ENCODE measurements at regions of chr16 and their contacts with region 1.

Region 1: DNA sequence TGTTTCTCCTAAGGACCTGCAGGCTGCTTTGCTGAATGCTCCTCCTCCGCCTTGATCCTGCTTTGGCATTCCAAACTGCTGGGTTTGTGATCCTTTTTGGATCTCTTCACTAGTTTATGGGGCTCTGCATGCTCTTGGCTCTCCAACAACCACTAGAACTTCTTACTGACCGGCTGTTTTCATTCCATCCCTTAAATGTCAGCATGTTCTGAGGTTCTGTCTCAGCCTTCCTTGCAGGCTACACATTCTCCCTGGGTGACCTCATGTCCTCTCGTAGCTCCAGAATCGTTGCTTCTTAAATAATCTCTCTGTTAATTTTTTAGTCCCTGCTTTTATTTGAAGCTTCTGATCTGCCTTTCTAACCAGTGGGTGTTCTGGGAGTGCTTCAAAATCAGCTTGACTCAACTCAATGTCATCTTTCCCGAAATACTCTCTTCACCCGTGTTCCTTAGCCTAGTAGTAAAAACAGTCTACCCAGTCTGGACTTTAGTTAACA is 119.0 kb upstream of the HS3ST2 start:
- DNase-seq: no peak
- H3K4me3 ChIP-seq: no peak overlapping the region
- H3K27ac ChIP-seq: peak overlapping the region; percentile 43 to 83 (median 65)
- H3K4me1 ChIP-seq: peaks cover 0 to 7% (median 7%) of the 10 kb centered on the region in 3 donors
- H3K27me3 ChIP-seq: peaks cover 0 to 4% (median 0%) of the 10 kb centered on the region in 4 donors
- CTCF ChIP-seq: no peak
- POLR2A ChIP-seq: no peak

Region 2: GRCh38 chr16:21560462-21560861 is 1134.5 kb before region 1 on chr16:
- intact Hi-C with region 1: loop called (anchors 5 kb)
- DNase-seq: no peak
- H3K4me3 ChIP-seq: no peak overlapping the region
- H3K27ac ChIP-seq: no peak overlapping the region
- H3K4me1 ChIP-seq: peaks cover 0 to 5% (median 3%) of the 10 kb centered on the region in 3 donors
- H3K27me3 ChIP-seq: peaks cover 0 to 26% (median 0%) of the 10 kb centered on the region in 4 donors
- CTCF ChIP-seq: no peak
- POLR2A ChIP-seq: no peak

Region 3: GRCh38 chr16:22614271-22614947 is 80.5 kb before region 1 on chr16:
- intact Hi-C with region 1: no loop called
- DNase-seq: no peak
- H3K4me3 ChIP-seq: no peak overlapping the region
- H3K27ac ChIP-seq: no peak overlapping the region
- H3K4me1 ChIP-seq: no peaks in the 10 kb centered on the region
- H3K27me3 ChIP-seq: peaks cover 0 to 55% (median 0%) of the 10 kb centered on the region in 4 donors
- CTCF ChIP-seq: no peak
- POLR2A ChIP-seq: no peak

Region 4: GRCh38 chr16:22775220-22775922 is 80.4 kb after region 1 on chr16:
- intact Hi-C with region 1: no loop called
- DNase-seq: no peak
- H3K4me3 ChIP-seq: no peak overlapping the region
- H3K27ac ChIP-seq: no peak overlapping the region
- H3K4me1 ChIP-seq: no peaks in the 10 kb centered on the region
- H3K27me3 ChIP-seq: peaks cover 0 to 21% (median 0%) of the 10 kb centered on the region in 4 donors
- CTCF ChIP-seq: no peak
- POLR2A ChIP-seq: no peak

Region 5: GRCh38 chr16:23060458-23061320 is 365.8 kb after region 1 on chr16:
- intact Hi-C with region 1: no loop called
- DNase-seq: no peak
- H3K4me3 ChIP-seq: no peak overlapping the region
- H3K27ac ChIP-seq: no peak overlapping the region
- H3K4me1 ChIP-seq: peaks cover 0 to 9% (median 0%) of the 10 kb centered on the region in 3 donors
- H3K27me3 ChIP-seq: no peaks in the 10 kb centered on the region
- CTCF ChIP-seq: peak; percentile 20 to 72 (median 70)
- POLR2A ChIP-seq: no peak

Region 6: GRCh38 chr16:23124315-23124714 is 429.4 kb after region 1 on chr16:
- intact Hi-C with region 1: no loop called
- DNase-seq: no peak
- H3K4me3 ChIP-seq: peak overlapping the region in 1 of 4 donors; percentile 33
- H3K27ac ChIP-seq: peak overlapping the region; percentile 55 to 84 (median 80)
- H3K4me1 ChIP-seq: peaks cover 12 to 76% (median 30%) of the 10 kb centered on the region in 3 donors
- H3K27me3 ChIP-seq: no peaks in the 10 kb centered on the region
- CTCF ChIP-seq: no peak
- POLR2A ChIP-seq: no peak